IMR-90 (cell line): ENCODE measurements at regions of chr6 and their contacts with region 1.

Region 1: GRCh38 chr6:128580224-128581110 is 60.1 kb upstream of the PTPRK start:
- DNase-seq: no peak
- ATAC-seq: no peak
- H3K4me3 ChIP-seq: no peak overlapping the region
- H3K27ac ChIP-seq: no peak overlapping the region
- H3K4me1 ChIP-seq: no peaks in the 10 kb centered on the region
- H3K27me3 ChIP-seq: no peaks in the 10 kb centered on the region
- CTCF ChIP-seq: no peak
- POLR2A ChIP-seq: no peak
- RAD21 ChIP-seq: no peak

Region 2: GRCh38 chr6:128605961-128606360 is 25.5 kb after region 1 on chr6:
- CTCF ChIA-PET with region 1: no interaction called
- POLR2A ChIA-PET with region 1: no interaction called
- dilution Hi-C with region 1: no loop called
- in situ Hi-C with region 1: no loop called
- intact Hi-C with region 1: loop called (anchors 1 kb)
- DNase-seq: peak; percentile 15
- ATAC-seq: 0 out of 2 replicates have a peak, but pooled peaks have one; percentile 14
- H3K4me3 ChIP-seq: no peak overlapping the region
- H3K27ac ChIP-seq: no peak overlapping the region
- H3K4me1 ChIP-seq: no peaks in the 10 kb centered on the region
- H3K27me3 ChIP-seq: no peaks in the 10 kb centered on the region
- CTCF ChIP-seq: no peak
- POLR2A ChIP-seq: no peak
- RAD21 ChIP-seq: no peak